PC-9 (cell line): ENCODE measurements at regions of chr11 and their contacts with region 1.

Region 1: DNA sequence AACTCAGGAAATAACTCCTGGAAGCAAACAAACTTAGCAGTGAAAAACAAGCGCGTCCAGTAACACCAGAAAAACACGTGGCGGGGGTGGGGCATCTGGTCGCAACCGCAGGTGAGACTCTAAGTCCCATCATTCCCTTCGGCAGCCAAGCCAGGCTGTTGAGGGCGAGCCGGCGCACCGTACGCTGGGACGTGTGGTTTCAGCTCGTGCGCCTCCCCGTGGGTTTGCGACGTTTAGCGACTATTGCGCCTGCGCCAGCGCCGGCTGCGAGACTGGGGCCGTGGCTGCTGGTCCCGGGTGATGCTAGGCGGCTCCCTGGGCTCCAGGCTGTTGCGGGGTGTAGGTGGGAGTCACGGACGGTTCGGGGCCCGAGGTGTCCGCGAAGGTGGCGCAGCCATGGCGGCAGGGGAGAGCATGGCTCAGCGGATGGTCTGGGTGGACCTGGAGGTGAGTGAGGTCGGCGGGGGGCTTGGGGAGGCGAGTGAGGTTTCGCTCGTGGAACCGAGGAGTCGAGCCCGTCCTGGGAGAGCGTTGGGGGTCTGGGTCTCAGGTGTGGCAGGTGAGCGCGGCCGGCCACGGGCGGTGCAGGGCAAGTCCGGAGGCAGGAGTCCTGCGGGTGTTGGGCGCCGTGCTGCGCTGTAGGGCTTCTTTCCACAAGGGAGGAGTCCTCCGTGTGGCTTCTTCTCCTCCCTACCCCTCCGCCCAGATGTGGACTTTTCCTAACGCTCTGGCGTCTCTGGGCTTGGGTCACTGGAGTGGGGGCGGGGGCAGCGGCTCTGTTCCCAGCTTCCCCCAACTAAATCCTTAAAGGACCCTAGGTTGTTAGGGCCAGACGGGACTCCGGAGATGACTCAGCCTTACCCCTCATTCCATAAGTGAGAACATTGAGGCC is at the start of gene REXO2:
- DNase-seq: peak; percentile 92 to 97
- H3K4me3 ChIP-seq: peak within 1 kb of the TSS; percentile 80
- H3K27ac ChIP-seq: peak within 1 kb of the TSS; percentile 83
- H3K4me1 ChIP-seq: peaks cover 33% of the 10 kb centered on the region
- H3K27me3 ChIP-seq: no peaks in the 10 kb centered on the region
- CTCF ChIP-seq: peak; percentile 48; the same call in 1 of the 2 replicates
- total RNA-seq, gene REXO2: 117 and 145 TPM in 2 replicates

Region 2: GRCh38 chr11:114340311-114341131 is 99.0 kb before region 1 on chr11:
- CTCF ChIA-PET with region 1: interaction called, 6 read pairs
- POLR2A ChIA-PET with region 1: no interaction called
- intact Hi-C with region 1: loop called (anchors 2 kb)
- DNase-seq: peak; percentile 38 to 74
- H3K4me3 ChIP-seq: no peak overlapping the region
- H3K27ac ChIP-seq: no peak overlapping the region
- H3K4me1 ChIP-seq: no peaks in the 10 kb centered on the region
- H3K27me3 ChIP-seq: peaks cover 18% of the 10 kb centered on the region
- CTCF ChIP-seq: peak; percentile 94

Region 3: GRCh38 chr11:114348200-114349191 is 91.0 kb before region 1 on chr11:
- CTCF ChIA-PET with region 1: no interaction called
- POLR2A ChIA-PET with region 1: interaction called, 5 read pairs
- intact Hi-C with region 1: loop called (anchors 2 kb)
- DNase-seq: peak; percentile 60 to 72
- H3K4me3 ChIP-seq: no peak overlapping the region
- H3K27ac ChIP-seq: no peak overlapping the region
- H3K4me1 ChIP-seq: peaks cover 11% of the 10 kb centered on the region
- H3K27me3 ChIP-seq: no peaks in the 10 kb centered on the region
- CTCF ChIP-seq: peak; percentile 85

Region 4: DNA sequence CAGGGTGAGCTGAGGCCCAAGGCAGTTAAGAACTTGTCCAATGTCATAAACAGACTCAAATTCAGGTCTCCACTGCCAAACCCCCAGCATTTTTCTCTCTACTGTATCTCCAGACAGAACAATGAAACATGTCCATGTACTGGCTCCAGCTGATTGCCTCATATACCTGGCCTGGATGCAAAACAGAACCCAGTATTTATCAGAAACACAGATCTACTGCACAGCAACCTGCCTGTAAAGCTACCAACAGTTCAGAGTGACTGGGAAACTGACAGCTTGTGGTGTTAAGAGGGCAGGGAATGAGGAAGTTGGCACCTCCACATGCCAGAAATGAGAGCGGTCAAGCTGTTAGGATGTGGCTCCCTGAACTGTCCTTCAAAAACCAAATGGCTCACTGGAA is 80.8 kb before region 1 on chr11:
- CTCF ChIA-PET with region 1: interaction called, 14 read pairs
- POLR2A ChIA-PET with region 1: no interaction called
- intact Hi-C with region 1: no loop called
- DNase-seq: peak; percentile 42 to 70
- H3K4me3 ChIP-seq: no peak overlapping the region
- H3K27ac ChIP-seq: no peak overlapping the region
- H3K4me1 ChIP-seq: no peaks in the 10 kb centered on the region; the same call in 1 of the 2 replicates
- H3K27me3 ChIP-seq: no peaks in the 10 kb centered on the region
- CTCF ChIP-seq: no peak

Region 5: DNA sequence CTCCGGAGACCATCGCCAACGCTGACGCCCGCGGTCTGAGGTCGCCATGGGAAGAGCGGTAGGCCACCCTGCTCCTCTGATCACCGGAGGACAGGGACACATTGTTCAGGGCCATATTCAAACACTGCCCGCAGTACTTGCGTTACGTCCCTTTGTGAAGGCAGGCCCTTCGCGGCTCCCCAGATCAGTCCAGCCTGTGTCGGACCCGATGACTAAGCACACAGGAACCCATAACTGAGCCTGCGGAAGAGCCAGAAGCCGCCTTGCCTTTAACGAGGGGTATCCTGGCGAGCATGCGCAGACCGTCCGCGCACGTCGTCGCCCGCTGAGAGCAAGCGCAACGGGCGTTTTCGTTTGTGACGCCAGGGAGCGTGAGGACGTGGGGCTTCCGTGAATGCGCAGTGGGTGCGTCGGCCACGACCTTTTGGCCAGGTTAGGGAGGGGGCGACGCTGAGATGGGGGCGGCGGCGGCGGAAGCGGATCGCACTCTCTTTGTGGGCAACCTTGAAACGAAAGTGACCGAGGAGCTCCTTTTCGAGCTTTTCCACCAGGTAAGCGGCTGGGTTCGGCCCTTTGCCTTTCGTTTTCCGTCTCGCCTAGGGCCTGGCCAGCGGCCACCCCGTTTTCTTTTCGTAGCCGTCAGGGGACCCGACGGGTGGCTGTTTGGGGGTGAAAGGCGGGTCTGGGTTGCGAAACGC is 39.1 kb before region 1 on chr11 and contains the starts of genes C11orf71 and RBM7:
- CTCF ChIA-PET with region 1: no interaction called
- POLR2A ChIA-PET with region 1: interaction called, 7 read pairs
- intact Hi-C with region 1: loop called (anchors 1 kb)
- DNase-seq: peak; percentile 95 to 98
- H3K4me3 ChIP-seq: peak within 1 kb of the TSS; percentile 89
- H3K27ac ChIP-seq: peak within 1 kb of the TSS; percentile 97
- H3K4me1 ChIP-seq: peaks cover 43% of the 10 kb centered on the region
- H3K27me3 ChIP-seq: no peaks in the 10 kb centered on the region
- CTCF ChIP-seq: 0 out of 2 replicates have a peak, but pooled peaks have one; percentile 6
- total RNA-seq, gene C11orf71: 3.7 and 4.9 TPM in 2 replicates
- total RNA-seq, gene RBM7: 18.9 and 34.7 TPM in 2 replicates

Region 6: GRCh38 chr11:114416441-114416961 is 23.0 kb before region 1 on chr11:
- CTCF ChIA-PET with region 1: no interaction called
- POLR2A ChIA-PET with region 1: interaction called, 8 read pairs
- intact Hi-C with region 1: loop called (anchors 1 kb)
- DNase-seq: peak; percentile 61 to 88
- H3K4me3 ChIP-seq: no peak overlapping the region
- H3K27ac ChIP-seq: peak overlapping the region; percentile 31
- H3K4me1 ChIP-seq: peaks cover 13% of the 10 kb centered on the region
- H3K27me3 ChIP-seq: no peaks in the 10 kb centered on the region
- CTCF ChIP-seq: no peak